ENCODE measurements at regions of chr15 and their contacts with region 1.

Region 1: GRCh38 chr15:71743861-71744382 is 66.4 kb upstream of the NR2E3 start:
- DNase-seq: peak in 1 of 2 donors; percentile 69
- ATAC-seq: no peak

Region 2: GRCh38 chr15:71455107-71455506 is 288.8 kb before region 1 on chr15:
- intact Hi-C with region 1: no loop called
- DNase-seq: no peak
- ATAC-seq: no peak

Region 3: GRCh38 chr15:71800835-71801745 is 57.2 kb after region 1 on chr15:
- intact Hi-C with region 1: loop called in 1 of 2 experiments (anchors 10 kb)
- DNase-seq: peak in 1 of 2 donors; percentile 34
- ATAC-seq: peak; percentile 92

Region 4: DNA sequence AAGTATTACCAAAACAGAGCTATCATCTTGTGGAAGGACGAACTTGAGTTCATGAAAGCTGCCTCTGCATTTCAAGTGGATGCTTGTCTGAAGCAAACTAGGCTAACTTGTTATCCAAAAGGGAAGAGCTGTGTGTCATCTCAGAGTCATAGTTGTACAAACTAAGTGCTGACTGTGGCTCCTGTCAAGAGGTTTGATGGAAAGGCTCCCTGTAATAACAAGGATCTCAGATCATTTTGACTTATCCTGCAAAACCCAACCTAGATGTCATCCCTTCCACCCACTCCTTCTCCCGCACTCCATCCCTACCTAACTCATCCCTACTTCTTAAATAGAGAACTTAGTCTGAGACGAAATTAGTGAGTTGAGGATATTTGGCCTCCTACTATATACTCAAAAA is 177.3 kb after region 1 on chr15:
- intact Hi-C with region 1: no loop called
- DNase-seq: no peak
- ATAC-seq: no peak

Region 5: GRCh38 chr15:72155635-72156616 is 412.0 kb after region 1 on chr15:
- intact Hi-C with region 1: loop called in 1 of 2 experiments (anchors 10 kb)
- DNase-seq: peak; percentile 84 to 93
- ATAC-seq: peak; percentile 80